Activated CD8-positive, alpha-beta T cell treated with anti-CD3 and anti-CD28 coated beads for 36 hours (primary cell): ENCODE measurements at regions of chr22 and their contacts with region 1.

Region 1: DNA sequence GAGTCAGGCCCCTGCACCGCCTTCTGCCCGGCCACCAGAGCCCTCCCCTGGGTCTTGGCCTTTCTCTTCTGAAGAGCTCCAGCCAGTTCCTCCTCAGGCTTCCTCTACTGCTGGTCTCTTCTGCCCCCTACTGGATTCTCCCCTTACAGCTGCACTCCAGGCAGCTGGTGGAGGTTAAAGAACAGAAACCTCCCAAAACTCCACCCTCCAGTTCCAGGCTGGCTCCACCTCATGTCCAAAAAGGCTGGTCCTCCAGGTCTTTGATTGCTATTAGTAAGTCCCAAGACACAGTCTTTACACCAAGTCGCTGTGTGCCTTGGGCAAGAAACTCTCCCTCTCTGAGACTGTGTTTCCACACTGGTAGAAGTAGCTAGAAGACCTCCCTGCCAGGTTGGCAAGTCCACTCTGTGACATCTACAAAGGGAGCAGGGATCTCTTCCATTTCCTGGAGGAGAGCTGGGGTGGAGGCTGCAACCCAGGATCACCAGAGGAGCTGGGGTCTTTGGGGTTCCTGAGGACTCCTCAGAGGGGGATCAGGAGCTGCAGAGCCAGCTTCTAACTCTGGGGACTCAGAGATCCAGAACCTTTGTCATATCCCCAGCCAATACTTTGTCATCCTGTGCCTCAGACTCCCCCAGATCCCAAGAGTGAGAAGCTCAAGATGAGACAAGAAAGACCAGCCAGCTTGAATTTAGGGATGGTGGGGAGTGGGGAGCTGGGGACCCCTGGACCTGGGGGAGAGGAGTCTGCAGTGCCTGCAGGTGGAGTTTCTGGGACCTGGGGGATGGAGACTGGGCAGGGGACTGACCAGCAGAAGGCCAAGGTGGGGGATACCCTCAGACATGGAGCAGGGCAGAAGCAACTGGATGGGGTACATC is 3.4 kb upstream of the IGLL5 start:
- DNase-seq: peak; percentile 83
- ATAC-seq: peak; percentile 72
- H3K4me3 Mint-ChIP-seq: no peak overlapping the region
- H3K27ac Mint-ChIP-seq: no peak overlapping the region
- H3K4me1 Mint-ChIP-seq: peaks cover 18% of the 10 kb centered on the region
- H3K27me3 Mint-ChIP-seq: peaks cover 15% of the 10 kb centered on the region
- CTCF ChIP-seq: peak; percentile 78

Region 2: DNA sequence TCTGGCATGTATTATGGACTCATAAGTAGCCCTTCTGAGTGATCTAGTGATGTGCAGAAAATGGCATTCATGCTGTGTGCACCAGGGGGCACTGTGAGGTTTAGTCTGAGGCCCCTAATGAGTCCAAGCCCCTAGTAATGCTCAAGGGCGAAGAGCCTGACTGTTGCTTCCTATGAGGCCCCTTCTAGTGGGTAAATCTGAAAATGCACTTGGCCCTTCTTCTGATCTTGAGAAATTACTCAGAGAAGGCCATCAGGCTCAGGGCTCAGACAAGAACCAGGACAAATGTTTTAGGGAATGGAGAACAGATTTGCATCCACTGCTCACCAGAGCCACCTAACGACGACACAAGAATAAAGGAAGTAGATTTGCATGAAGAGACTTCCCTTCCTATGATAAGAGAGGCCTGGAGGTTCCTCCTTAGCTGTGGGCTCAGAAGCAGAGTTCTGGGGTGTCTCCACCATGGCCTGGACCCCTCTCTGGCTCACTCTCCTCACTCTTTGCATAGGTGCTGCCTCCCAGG is 164.0 kb before region 1 on chr22:
- CTCF ChIA-PET with region 1: interaction called, 22 read pairs
- POLR2A ChIA-PET with region 1: no interaction called
- intact Hi-C with region 1: no loop called
- DNase-seq: peak; percentile 83
- ATAC-seq: peak; percentile 85
- H3K4me3 Mint-ChIP-seq: no peak overlapping the region
- H3K27ac Mint-ChIP-seq: peak overlapping the region; percentile 43
- H3K4me1 Mint-ChIP-seq: peaks cover 40% of the 10 kb centered on the region
- H3K27me3 Mint-ChIP-seq: no peaks in the 10 kb centered on the region
- CTCF ChIP-seq: peak; percentile 81

Region 3: GRCh38 chr22:22753526-22754267 is 130.6 kb before region 1 on chr22:
- CTCF ChIA-PET with region 1: interaction called, 37 read pairs
- POLR2A ChIA-PET with region 1: no interaction called
- intact Hi-C with region 1: loop called (anchors 5 kb)
- DNase-seq: peak; percentile 89
- ATAC-seq: peak; percentile 98
- H3K4me3 Mint-ChIP-seq: no peak overlapping the region
- H3K27ac Mint-ChIP-seq: peak overlapping the region; percentile 81
- H3K4me1 Mint-ChIP-seq: peaks cover 51% of the 10 kb centered on the region
- H3K27me3 Mint-ChIP-seq: no peaks in the 10 kb centered on the region
- CTCF ChIP-seq: peak; percentile 92

Region 4: DNA sequence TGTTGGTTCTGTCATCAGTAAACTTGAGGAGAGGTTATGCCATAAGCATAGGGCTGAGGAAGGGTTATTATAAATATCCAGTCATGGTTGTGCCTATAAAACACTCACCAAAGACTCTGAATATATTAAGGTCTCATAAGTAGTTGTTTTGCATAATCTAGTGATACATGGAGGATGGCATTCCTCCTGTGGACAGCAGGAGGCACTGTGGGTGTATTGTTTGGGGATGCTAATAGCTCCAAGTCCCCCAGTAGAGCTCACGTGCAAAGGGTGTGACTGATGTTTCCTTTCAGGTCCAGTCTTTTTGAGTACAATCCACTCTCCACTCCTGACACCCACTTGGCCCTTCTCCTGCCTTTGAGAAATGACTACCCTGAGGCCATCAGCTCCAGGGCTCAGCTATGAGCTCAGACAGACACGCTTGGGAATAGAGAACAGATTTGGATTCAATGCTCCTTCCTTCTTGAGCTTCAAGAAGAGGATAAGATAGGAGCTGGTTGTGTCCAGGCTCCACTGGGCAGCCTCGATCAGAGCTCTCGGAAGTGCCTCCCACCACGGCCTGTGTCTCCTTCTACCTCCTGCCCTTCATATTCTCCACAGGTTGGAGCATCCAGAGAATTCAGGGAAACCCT is 81.8 kb before region 1 on chr22:
- CTCF ChIA-PET with region 1: interaction called, 34 read pairs
- POLR2A ChIA-PET with region 1: no interaction called
- intact Hi-C with region 1: loop called (anchors 5 kb)
- DNase-seq: peak; percentile 66
- ATAC-seq: peak; percentile 64
- H3K4me3 Mint-ChIP-seq: no peak overlapping the region
- H3K27ac Mint-ChIP-seq: no peak overlapping the region
- H3K4me1 Mint-ChIP-seq: peaks cover 28% of the 10 kb centered on the region
- H3K27me3 Mint-ChIP-seq: no peaks in the 10 kb centered on the region
- CTCF ChIP-seq: peak; percentile 80

Region 5: DNA sequence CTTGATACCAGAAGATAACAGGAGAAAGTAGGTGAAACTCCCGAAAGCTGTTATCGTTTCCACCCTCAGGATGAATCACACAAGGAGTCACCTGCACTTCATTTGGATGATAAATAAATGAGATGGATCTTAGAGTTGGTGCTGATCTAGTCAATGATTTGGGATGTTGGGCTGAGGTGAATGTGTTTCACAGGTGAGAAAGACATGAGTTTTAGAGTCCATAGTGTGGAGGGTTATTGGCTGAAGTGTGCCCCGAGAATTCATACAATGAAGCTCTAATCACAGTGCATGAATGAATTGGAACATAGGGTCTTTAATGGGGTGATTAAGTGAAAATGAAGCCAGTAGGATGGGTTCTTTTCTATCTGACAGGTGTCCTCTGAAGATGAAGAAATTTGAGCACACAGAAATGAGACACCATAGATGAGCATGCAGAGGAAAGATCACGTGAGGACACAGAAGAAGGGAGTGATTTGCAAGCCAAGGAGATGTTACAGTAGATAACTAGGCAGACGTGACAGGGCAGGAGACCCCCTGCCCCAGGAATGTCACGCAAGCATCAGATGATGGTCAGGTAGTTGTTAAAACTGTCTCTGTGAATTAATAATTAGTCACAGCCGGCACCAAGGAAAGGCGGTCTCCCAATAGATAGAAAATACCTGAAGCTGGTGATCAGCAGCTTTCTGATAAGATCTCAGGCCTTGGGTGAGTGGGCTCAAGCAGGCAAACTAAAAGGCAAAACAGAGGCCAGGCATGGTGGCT is 56.9 kb before region 1 on chr22:
- CTCF ChIA-PET with region 1: interaction called, 11 read pairs
- POLR2A ChIA-PET with region 1: no interaction called
- intact Hi-C with region 1: no loop called
- DNase-seq: no peak
- ATAC-seq: no peak
- H3K4me3 Mint-ChIP-seq: no peak overlapping the region
- H3K27ac Mint-ChIP-seq: no peak overlapping the region
- H3K4me1 Mint-ChIP-seq: peaks cover 30% of the 10 kb centered on the region
- H3K27me3 Mint-ChIP-seq: no peaks in the 10 kb centered on the region
- CTCF ChIP-seq: no peak

Region 6: DNA sequence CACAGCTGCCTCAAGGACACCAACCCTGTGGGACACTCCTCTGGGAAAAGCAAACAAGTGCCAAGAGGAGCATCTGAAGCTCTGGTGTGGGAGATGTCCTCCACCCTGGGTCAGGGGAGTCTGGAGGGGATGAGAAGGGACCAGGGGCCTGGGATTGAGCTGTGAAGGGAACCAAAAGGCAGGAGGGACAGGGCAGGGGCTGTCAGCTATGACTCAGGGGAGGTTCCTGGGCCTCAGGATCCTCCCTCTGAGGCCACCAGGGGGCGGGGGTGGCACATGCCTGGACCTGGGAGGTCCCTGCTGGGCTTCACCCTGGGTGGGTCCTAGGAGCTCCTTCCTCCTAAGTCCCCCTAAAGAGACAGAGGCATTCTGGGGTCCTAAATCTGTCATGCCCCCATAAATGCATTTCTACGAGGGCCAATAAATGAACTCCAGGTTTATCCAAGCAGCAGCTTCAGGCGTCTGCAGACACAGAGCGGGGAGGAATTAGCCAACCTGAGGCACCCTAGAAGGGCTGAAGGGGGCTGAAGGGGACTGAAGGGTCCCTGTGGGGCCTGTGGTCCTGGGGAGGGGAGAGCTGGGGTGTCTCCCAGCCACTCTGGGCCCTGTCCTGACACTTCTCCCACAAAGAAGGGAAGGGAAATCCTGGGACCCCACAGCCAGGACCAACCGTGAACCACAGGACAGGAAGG is 28.5 kb before region 1 on chr22:
- CTCF ChIA-PET with region 1: interaction called, 122 read pairs
- POLR2A ChIA-PET with region 1: no interaction called
- intact Hi-C with region 1: no loop called
- DNase-seq: peak; percentile 68
- ATAC-seq: peak; percentile 91
- H3K4me3 Mint-ChIP-seq: no peak overlapping the region
- H3K27ac Mint-ChIP-seq: no peak overlapping the region
- H3K4me1 Mint-ChIP-seq: peaks cover 5% of the 10 kb centered on the region
- H3K27me3 Mint-ChIP-seq: peaks cover 2% of the 10 kb centered on the region
- CTCF ChIP-seq: peak; percentile 55

Region 7: DNA sequence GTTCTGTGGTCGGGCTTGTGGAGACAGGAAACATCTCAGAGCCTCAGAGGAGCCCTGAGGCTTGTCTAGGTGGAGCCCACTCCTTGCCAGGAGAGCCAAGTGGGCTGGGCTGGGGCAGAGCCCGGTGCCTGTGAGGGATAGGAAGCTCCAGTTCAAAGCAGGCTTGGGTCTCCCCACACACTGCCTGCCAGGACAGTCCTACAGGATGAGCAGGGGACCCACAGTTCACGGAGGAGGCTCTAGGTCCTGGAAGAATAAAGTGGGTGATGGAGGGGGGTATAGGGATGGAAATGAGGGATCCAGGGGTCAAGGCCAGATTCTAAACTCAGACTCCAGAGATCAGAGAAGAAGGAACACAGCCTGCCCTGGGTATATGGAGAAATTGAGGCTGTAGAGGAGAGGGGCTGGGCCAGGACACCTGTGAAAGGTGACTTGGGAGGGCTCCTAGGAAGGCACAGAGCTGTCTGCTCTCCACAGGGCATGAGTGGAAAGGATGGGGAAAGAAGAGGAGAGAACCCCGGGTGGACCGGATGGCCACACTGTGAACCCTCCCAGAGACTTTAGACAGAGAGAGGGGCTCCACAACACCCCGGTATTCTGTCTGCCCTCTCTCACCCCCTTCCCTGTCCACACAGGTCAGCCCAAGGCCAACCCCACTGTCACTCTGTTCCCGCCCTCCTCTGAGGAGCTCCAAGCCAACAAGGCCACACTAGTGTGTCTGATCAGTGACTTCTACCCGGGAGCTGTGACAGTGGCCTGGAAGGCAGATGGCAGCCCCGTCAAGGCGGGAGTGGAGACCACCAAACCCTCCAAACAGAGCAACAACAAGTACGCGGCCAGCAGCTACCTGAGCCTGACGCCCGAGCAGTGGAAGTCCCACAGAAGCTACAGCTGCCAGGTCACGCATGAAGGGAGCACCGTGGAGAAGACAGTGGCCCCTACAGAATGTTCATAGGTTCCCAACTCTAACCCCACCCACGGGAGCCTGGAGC is 10.8 kb after region 1 on chr22:
- CTCF ChIA-PET with region 1: interaction called, 10 read pairs
- POLR2A ChIA-PET with region 1: no interaction called
- intact Hi-C with region 1: no loop called
- DNase-seq: no peak
- ATAC-seq: no peak
- H3K4me3 Mint-ChIP-seq: no peak overlapping the region
- H3K27ac Mint-ChIP-seq: no peak overlapping the region
- H3K4me1 Mint-ChIP-seq: no peaks in the 10 kb centered on the region
- H3K27me3 Mint-ChIP-seq: peaks cover 26% of the 10 kb centered on the region
- CTCF ChIP-seq: no peak

Region 8: DNA sequence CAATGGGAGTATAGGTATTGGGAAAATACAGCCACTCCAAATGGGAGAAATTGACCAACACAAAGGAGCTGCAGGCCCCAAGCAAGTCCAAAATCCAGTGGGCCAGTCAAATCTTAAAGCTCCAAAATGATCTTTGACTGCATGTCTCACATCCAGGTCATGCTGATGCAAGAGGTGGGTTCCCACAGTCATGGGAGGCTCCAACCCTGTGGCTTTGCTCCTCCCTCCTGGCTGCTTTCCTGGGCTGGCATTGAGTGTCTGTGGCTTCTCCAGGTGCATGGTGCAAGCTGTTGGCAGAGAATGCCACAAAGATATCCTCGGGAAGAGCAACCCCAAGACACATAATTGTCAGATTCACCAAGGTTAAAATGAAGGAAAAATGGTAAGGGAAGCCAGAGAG is 84.1 kb after region 1 on chr22:
- CTCF ChIA-PET with region 1: no interaction called
- POLR2A ChIA-PET with region 1: no interaction called
- intact Hi-C with region 1: no loop called
- DNase-seq: no peak
- ATAC-seq: no peak
- H3K4me3 Mint-ChIP-seq: no peak overlapping the region
- H3K27ac Mint-ChIP-seq: no peak overlapping the region
- H3K4me1 Mint-ChIP-seq: no peaks in the 10 kb centered on the region
- H3K27me3 Mint-ChIP-seq: peaks cover 54% of the 10 kb centered on the region
- CTCF ChIP-seq: no peak